Heart left ventricle (tissue), 16 donors: ENCODE measurements at regions of chr5 and their contacts with region 1.

Region 1: GRCh38 chr5:134041570-134042411 is 37.0 kb upstream of the VDAC1 start:
- DNase-seq: no peak
- ATAC-seq: no peak
- H3K4me3 ChIP-seq: no peak overlapping the region
- H3K27ac ChIP-seq: no peak overlapping the region
- H3K4me1 ChIP-seq: no peaks in the 10 kb centered on the region
- H3K27me3 ChIP-seq: no peaks in the 10 kb centered on the region
- CTCF ChIP-seq: no peak
- POLR2A ChIP-seq: no peak

Region 2: DNA sequence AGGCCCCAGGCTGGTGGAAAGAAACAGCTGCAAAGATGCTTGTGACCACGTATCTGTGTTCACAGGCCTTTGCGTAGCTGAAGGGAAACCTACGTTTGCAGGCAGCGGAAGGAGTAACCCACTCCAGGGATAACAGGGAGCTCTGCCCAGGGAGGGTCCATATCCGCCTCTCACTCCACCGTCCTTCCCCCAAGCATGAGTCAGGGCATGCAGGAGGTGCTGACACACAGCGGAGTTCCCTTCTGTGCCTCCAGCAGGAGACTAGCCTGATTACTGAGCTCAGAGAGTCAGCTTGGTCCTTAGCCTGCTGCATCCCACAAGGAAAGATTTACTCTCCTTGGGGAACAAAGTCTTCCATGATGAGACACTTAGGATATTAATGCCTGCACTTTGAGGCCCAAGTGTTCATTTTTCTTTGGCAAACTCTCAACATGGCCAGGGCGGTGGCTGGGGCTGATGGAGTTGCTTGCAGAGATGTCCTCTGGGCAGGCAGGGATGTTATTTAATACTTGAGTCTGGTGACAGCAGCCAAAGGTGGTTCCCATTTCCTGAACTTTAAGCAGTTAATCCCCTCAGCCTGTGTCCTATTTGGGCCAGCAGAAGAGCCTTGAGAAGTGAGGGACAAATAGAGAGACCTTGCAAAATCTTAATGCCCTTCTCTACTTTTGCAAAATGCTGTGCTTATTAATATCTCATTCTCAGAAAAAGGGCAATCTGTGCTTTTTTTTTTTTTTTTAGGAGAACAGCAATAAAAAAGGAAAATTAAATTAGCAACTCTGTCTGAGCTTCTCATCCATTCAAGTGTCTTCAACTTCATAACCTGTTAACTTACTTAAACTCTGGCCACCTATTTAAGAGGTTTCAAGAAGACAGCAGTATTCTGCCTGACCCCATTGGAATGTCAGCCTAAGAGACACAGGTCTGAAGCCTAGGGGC is 767.9 kb before region 1 on chr5:
- intact Hi-C with region 1: no loop called
- DNase-seq: no peak
- ATAC-seq: peak in 2 of 4 donors; percentile 34 to 52
- H3K4me3 ChIP-seq: no peak overlapping the region
- H3K27ac ChIP-seq: no peak overlapping the region
- H3K4me1 ChIP-seq: no peaks in the 10 kb centered on the region
- H3K27me3 ChIP-seq: no peaks in the 10 kb centered on the region
- CTCF ChIP-seq: no peak
- POLR2A ChIP-seq: no peak

Region 3: GRCh38 chr5:134053840-134054338 is 12.1 kb after region 1 on chr5:
- intact Hi-C with region 1: no loop called
- DNase-seq: no peak
- ATAC-seq: peak in 1 of 4 donors; percentile 26
- H3K4me3 ChIP-seq: no peak overlapping the region
- H3K27ac ChIP-seq: peak overlapping the region in 1 of 12 donors; percentile 10
- H3K4me1 ChIP-seq: peaks cover 0 to 12% (median 0%) of the 10 kb centered on the region in 12 donors
- H3K27me3 ChIP-seq: no peaks in the 10 kb centered on the region
- CTCF ChIP-seq: no peak
- POLR2A ChIP-seq: no peak

Region 4: GRCh38 chr5:134092878-134093277 is 51.1 kb after region 1 on chr5:
- intact Hi-C with region 1: loop called in 2 of 10 experiments (anchors 2 to 5 kb)
- DNase-seq: no peak
- ATAC-seq: no peak
- H3K4me3 ChIP-seq: no peak overlapping the region
- H3K27ac ChIP-seq: no peak overlapping the region
- H3K4me1 ChIP-seq: peaks cover 0 to 12% (median 0%) of the 10 kb centered on the region in 12 donors
- H3K27me3 ChIP-seq: no peaks in the 10 kb centered on the region
- CTCF ChIP-seq: no peak
- POLR2A ChIP-seq: no peak

Region 5: GRCh38 chr5:134101686-134102439 is 60.1 kb after region 1 on chr5:
- intact Hi-C with region 1: loop called in 1 of 10 experiments (anchors 2 kb)
- DNase-seq: peak in 4 of 5 donors; percentile 53 to 86 (median 63)
- ATAC-seq: peak; percentile 47 to 85 (median 78)
- H3K4me3 ChIP-seq: no peak overlapping the region
- H3K27ac ChIP-seq: no peak overlapping the region
- H3K4me1 ChIP-seq: peaks cover 0 to 34% (median 6%) of the 10 kb centered on the region in 12 donors
- H3K27me3 ChIP-seq: no peaks in the 10 kb centered on the region
- CTCF ChIP-seq: peak; percentile 78 to 96 (median 86)
- POLR2A ChIP-seq: no peak

Region 6: GRCh38 chr5:134140530-134141201 is 98.9 kb after region 1 on chr5:
- intact Hi-C with region 1: loop called in 9 of 10 experiments (anchors 1 to 5 kb)
- DNase-seq: peak in 4 of 5 donors; percentile 55 to 66 (median 66)
- ATAC-seq: peak; percentile 60 to 79 (median 66)
- H3K4me3 ChIP-seq: no peak overlapping the region
- H3K27ac ChIP-seq: no peak overlapping the region
- H3K4me1 ChIP-seq: peaks cover 0 to 45% (median 22%) of the 10 kb centered on the region in 12 donors
- H3K27me3 ChIP-seq: no peaks in the 10 kb centered on the region
- CTCF ChIP-seq: peak; percentile 63 to 85 (median 73)
- POLR2A ChIP-seq: no peak

Region 7: GRCh38 chr5:134145779-134146581 is 104.2 kb after region 1 on chr5:
- intact Hi-C with region 1: loop called in 9 of 10 experiments (anchors 1 to 5 kb)
- DNase-seq: peak in 4 of 5 donors; percentile 68 to 74 (median 71)
- ATAC-seq: peak; percentile 55 to 88 (median 80)
- H3K4me3 ChIP-seq: no peak overlapping the region
- H3K27ac ChIP-seq: no peak overlapping the region
- H3K4me1 ChIP-seq: peaks cover 0 to 38% (median 20%) of the 10 kb centered on the region in 12 donors
- H3K27me3 ChIP-seq: no peaks in the 10 kb centered on the region
- CTCF ChIP-seq: peak; percentile 87 to 98 (median 94)
- POLR2A ChIP-seq: no peak

Region 8: GRCh38 chr5:134184155-134185135 is 142.7 kb after region 1 on chr5:
- intact Hi-C with region 1: no loop called
- DNase-seq: peak; percentile 63 to 73 (median 69)
- ATAC-seq: peak; percentile 76 to 89 (median 86)
- H3K4me3 ChIP-seq: no peak overlapping the region
- H3K27ac ChIP-seq: no peak overlapping the region
- H3K4me1 ChIP-seq: peaks cover 0 to 10% (median 0%) of the 10 kb centered on the region in 12 donors
- H3K27me3 ChIP-seq: no peaks in the 10 kb centered on the region
- CTCF ChIP-seq: peak; percentile 84 to 97 (median 92)
- POLR2A ChIP-seq: no peak

Region 9: DNA sequence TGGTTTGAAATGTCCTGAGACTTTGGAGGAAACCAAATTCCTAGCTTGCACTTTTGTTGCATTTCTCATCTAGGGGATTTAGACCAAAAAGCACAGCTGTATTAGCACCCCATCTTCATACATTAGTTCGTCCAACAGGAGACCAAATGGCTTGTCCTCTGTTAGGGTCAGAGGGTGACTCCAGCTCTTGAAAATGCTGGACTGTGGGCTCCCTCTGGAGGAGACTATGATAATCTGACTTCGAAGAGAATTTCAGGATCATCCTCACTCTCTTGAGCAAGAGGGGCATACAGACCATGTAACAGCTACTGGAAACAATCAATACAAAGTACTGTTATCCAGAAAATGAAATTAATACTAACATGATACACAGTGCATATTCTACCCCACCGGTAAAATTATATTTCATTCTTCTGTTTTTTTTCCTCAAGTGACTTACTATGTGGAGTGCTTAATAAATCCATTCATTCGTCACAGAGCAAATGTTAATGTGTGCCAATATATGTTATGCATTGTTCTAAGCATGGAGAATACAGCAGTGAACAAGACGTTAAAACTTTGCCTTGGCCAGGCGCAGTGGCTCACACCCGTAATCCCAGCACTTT is 247.8 kb after region 1 on chr5:
- intact Hi-C with region 1: loop called in 2 of 10 experiments (anchors 10 kb)
- DNase-seq: peak in 4 of 5 donors; percentile 43 to 65 (median 50)
- ATAC-seq: peak; percentile 94 to 97 (median 95)
- H3K4me3 ChIP-seq: no peak overlapping the region
- H3K27ac ChIP-seq: no peak overlapping the region
- H3K4me1 ChIP-seq: peaks cover 0 to 3% (median 0%) of the 10 kb centered on the region in 12 donors
- H3K27me3 ChIP-seq: no peaks in the 10 kb centered on the region
- CTCF ChIP-seq: peak; percentile 54 to 85 (median 74)
- POLR2A ChIP-seq: no peak